CD8-positive, alpha-beta T cell (primary cell): ENCODE measurements at regions of chr5 and their contacts with region 1.

Region 1: DNA sequence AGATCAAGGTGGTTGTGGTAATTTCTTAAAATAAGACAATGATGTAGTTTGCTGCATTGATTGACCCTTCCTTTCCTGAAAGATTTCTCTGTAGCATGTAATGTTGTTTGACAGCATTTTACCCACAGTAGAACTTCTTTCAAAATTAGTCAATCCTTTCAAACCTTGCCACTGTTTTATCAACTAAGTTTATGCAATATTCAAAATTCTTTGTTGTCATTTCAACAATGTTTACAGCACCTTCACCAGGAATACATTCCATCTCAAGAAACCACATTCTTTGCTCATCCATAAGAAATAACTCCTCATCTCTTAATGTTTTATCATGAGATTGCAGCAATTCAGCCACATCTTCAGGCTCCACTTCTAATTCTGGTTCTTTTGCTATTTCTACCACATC is 43.8 kb downstream of the NR2F1 start:
- DNase-seq: no peak
- ATAC-seq: no peak
- H3K4me3 ChIP-seq: no peak overlapping the region
- H3K4me3 Mint-ChIP-seq: no peak overlapping the region
- H3K27ac ChIP-seq: no peak overlapping the region
- H3K27ac Mint-ChIP-seq: no peak overlapping the region
- H3K4me1 ChIP-seq: peaks cover 7% of the 10 kb centered on the region
- H3K4me1 Mint-ChIP-seq: peaks cover 11% of the 10 kb centered on the region
- H3K27me3 ChIP-seq: no peaks in the 10 kb centered on the region
- H3K27me3 Mint-ChIP-seq: no peaks in the 10 kb centered on the region
- CTCF ChIP-seq: no peak

Region 2: DNA sequence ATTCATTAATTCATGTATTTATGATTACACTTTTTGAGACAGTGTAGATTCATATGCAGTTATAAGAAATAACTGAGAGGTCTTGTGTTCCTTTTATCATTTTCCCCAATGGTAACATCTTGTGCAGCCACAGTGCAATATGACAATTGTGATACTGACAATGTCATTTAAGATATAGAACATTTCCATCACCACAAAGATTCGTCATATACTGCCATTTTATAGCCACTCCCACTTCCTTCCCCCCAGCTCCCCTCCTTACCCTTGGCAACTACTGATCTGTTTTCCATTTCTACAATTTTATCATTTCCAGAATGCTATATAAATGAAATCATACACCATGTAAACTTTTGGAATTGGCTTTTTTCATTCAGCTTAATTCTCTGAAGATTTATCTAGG is 10.0 kb after region 1 on chr5:
- CTCF ChIA-PET with region 1: no interaction called
- POLR2A ChIA-PET with region 1: no interaction called
- intact Hi-C with region 1: no loop called
- DNase-seq: no peak
- ATAC-seq: no peak
- H3K4me3 ChIP-seq: no peak overlapping the region
- H3K4me3 Mint-ChIP-seq: no peak overlapping the region
- H3K27ac ChIP-seq: no peak overlapping the region
- H3K27ac Mint-ChIP-seq: no peak overlapping the region
- H3K4me1 ChIP-seq: no peaks in the 10 kb centered on the region
- H3K4me1 Mint-ChIP-seq: no peaks in the 10 kb centered on the region
- H3K27me3 ChIP-seq: no peaks in the 10 kb centered on the region
- H3K27me3 Mint-ChIP-seq: no peaks in the 10 kb centered on the region
- CTCF ChIP-seq: no peak

Region 3: DNA sequence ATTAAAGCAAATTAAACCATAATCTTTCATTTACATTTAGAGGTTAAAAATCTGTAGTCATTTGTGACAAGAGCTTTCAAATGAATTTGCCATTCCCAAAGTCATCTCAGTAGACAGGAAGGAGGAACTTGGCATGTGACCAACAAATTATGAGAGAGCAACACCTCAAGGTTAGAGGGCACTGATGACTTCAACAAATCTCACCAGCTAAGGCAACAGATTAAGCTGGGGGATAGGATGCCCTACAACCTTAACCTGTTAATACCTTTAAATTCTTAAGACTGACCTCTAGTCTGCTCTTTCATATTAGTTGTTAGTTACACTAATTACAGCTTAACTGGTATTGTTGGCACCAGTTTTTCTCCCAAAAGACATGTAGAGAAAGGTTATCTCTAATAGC is 96.2 kb after region 1 on chr5:
- CTCF ChIA-PET with region 1: no interaction called
- POLR2A ChIA-PET with region 1: no interaction called
- intact Hi-C with region 1: loop called in 1 of 2 experiments (anchors 5 kb)
- DNase-seq: peak in 2 of 9 experiments; percentile 1 to 5
- ATAC-seq: no peak
- H3K4me3 ChIP-seq: no peak overlapping the region
- H3K4me3 Mint-ChIP-seq: no peak overlapping the region
- H3K27ac ChIP-seq: no peak overlapping the region
- H3K27ac Mint-ChIP-seq: no peak overlapping the region
- H3K4me1 ChIP-seq: no peaks in the 10 kb centered on the region
- H3K4me1 Mint-ChIP-seq: peaks cover 22% of the 10 kb centered on the region
- H3K27me3 ChIP-seq: no peaks in the 10 kb centered on the region
- H3K27me3 Mint-ChIP-seq: no peaks in the 10 kb centered on the region
- CTCF ChIP-seq: no peak